Activated T-helper 2 cell treated with anti-CD3 and anti-CD28 coated beads, Interferon-gamma antibody, Interleukin-2, Interleukin-4, amounts not matched to agents 10 μg/mL and 5 μg/mL and 100 μg/mL, durations not matched to agents 14 hours and 24 hours and 36 hours (primary cell): ENCODE measurements at regions of chr3 and their contacts with region 1.

Region 1: DNA sequence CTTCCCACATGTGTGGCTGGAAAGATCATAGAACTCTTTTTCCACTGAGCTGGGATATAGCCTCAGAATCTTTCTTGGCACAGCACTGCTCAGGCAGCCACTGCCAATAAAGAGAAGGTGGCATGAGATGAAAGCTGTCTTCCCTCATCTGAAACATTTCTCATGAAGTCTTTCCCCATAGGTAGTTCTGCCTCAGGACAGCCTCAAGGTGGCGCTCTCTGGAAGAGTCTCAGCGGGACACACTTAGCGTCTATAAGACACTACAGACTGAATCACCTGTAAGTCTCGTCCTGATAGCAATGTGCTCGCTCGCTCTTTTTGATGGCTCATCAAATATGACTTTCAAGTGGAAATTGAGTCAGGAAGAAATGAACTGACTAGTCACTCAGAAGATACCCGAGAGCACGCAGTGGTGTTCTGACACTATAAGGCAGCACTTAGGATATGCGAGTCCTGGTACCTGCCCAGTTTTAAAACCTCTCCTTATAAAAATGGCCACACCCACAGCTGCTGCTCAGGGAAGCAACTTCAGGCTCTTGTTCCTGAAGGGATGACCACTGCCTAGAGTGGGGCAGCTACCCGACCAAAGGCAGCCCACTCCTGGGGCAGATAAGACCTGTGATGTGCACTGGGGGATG is 269.5 kb downstream of the SUCLG2 start:
- DNase-seq: peak; percentile 14
- H3K4me3 Mint-ChIP-seq: no peak overlapping the region
- H3K27ac Mint-ChIP-seq: no peak overlapping the region
- H3K4me1 Mint-ChIP-seq: peaks cover 29% of the 10 kb centered on the region
- H3K27me3 Mint-ChIP-seq: no peaks in the 10 kb centered on the region

Region 2: GRCh38 chr3:67083277-67083676 is 301.6 kb before region 1 on chr3:
- intact Hi-C with region 1: loop called (anchors 1 kb)
- DNase-seq: peak; percentile 28
- H3K4me3 Mint-ChIP-seq: no peak overlapping the region
- H3K27ac Mint-ChIP-seq: peak overlapping the region; percentile 55
- H3K4me1 Mint-ChIP-seq: peaks cover 20% of the 10 kb centered on the region
- H3K27me3 Mint-ChIP-seq: peaks cover 3% of the 10 kb centered on the region

Region 3: DNA sequence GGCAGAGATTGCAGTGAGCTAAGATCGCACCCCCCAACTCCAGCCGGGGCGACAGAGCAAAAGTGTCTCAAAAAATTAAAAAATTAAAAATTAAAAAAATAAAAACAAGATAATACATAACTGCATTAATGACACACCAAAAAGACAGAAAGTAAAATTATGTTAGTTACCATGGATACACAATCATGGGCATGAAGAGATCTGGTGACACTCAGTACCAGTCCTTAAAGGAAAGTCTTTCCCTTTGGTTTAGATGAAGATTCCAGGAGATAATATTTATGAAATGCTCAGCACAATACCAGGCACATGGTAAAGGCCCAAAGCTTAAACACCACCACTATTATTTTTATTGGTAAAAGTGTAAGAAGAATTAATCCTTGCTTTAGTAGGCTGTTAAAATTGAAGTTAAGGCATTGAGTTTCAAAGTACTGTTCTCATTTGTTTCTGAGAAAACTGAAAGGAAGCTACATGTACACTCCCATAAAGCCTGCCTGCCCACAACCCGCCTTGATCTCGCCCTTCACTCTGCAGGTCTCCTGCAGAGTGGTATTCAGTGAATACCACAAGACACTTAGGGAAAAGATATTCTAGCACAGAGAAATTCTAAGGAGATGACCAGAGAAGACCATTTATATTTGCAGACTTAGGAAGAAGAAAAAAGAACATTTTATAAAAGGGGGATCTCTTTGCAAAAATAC is 217.2 kb after region 1 on chr3:
- intact Hi-C with region 1: loop called (anchors 5 kb)
- DNase-seq: no peak
- H3K4me3 Mint-ChIP-seq: peak overlapping the region; percentile 51
- H3K27ac Mint-ChIP-seq: peak overlapping the region; percentile 51
- H3K4me1 Mint-ChIP-seq: peaks cover 48% of the 10 kb centered on the region
- H3K27me3 Mint-ChIP-seq: no peaks in the 10 kb centered on the region

Region 4: DNA sequence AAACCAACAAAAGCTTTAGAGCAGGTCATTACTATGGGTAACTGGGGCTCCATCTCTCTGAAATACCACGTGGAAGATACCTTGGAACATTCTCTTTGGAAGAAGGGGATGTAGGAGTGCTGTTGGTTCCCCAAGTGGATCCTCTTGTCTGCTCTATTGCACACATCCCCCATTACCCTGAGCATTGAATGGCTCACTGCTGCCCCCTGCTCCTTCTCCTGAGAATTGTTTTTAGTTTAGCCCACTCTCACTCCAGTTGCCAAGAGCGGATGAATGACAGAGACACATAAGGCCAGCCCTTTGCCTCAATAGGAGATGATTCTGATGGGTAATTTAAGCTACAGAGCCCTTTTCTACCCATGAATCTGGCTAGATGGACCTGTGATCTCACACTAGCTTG is 405.2 kb after region 1 on chr3:
- intact Hi-C with region 1: loop called (anchors 1 kb)
- DNase-seq: peak; percentile 23
- H3K4me3 Mint-ChIP-seq: no peak overlapping the region
- H3K27ac Mint-ChIP-seq: no peak overlapping the region
- H3K4me1 Mint-ChIP-seq: peaks cover 2% of the 10 kb centered on the region
- H3K27me3 Mint-ChIP-seq: peaks cover 8% of the 10 kb centered on the region

Region 5: DNA sequence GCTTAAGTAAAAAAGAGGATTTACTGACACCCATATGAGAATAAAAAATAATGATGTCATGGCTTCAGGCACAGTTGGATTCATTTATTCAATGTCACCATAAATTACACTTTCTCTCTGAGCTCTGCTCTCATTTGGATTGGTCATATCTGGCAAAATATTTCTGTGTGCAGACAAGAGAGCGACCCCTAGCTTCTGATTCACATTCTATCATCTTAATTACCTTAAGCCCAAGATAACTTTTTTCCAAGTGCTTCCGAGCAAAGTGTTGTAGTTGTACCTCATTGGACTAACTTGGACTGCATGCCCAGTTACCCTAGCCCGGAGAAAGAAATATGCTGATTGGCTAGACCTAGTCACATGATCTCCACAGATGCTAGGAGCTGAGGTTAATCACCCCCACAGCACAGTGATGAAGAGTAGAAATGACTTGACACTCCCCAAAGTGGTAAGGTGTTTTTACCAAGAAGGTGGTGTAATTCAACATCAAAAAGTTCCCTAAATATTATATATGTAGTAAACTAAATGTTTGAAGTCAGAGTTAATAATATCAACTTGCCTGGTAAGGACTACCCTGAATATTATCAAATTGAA is 821.7 kb after region 1 on chr3:
- intact Hi-C with region 1: no loop called
- DNase-seq: no peak
- H3K4me3 Mint-ChIP-seq: no peak overlapping the region
- H3K27ac Mint-ChIP-seq: no peak overlapping the region
- H3K4me1 Mint-ChIP-seq: no peaks in the 10 kb centered on the region
- H3K27me3 Mint-ChIP-seq: no peaks in the 10 kb centered on the region

Region 6: DNA sequence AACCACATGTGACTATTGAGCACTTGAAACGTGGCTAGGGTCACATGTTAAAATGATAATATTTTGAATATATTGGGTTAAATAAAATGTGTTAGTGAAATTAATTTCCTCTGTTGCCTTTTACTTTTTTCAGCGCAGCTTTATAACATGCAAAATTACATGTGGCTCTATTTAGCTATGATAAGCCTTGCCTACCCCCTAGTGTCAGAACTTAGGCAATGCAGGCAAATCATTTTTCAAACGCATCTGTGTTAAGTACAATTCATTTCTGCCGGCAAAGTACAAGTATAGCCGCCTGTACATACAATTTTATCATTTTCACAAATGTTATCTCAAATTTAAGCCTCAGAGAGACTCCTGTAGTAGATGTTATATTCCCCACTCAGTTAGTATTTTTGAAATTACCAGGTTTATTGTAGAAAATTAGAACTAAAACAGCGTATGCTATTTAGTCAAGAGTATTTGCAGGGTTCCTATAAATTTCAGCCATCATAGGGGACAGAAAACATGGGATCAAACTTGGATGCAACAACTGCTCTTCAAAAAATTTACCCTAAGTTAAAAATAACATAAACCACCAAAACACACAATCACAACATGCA is 1491.3 kb after region 1 on chr3:
- intact Hi-C with region 1: loop called (anchors 10 kb)
- DNase-seq: no peak
- H3K4me3 Mint-ChIP-seq: no peak overlapping the region
- H3K27ac Mint-ChIP-seq: no peak overlapping the region
- H3K4me1 Mint-ChIP-seq: no peaks in the 10 kb centered on the region
- H3K27me3 Mint-ChIP-seq: peaks cover 14% of the 10 kb centered on the region